PC-3 (cell line): ENCODE measurements at regions of chr3 and their contacts with region 1.

Region 1: GRCh38 chr3:4290272-4290893 is 12.8 kb upstream of the SETMAR start:
- DNase-seq: peak; percentile 74
- ATAC-seq: peak; percentile 72
- H3K4me3 ChIP-seq: no peak overlapping the region
- H3K27ac ChIP-seq: no peak overlapping the region
- H3K4me1 ChIP-seq: no peaks in the 10 kb centered on the region
- H3K27me3 ChIP-seq: peaks cover 18% of the 10 kb centered on the region; the same call in 1 of the 2 replicates
- CTCF ChIP-seq: peak; percentile 93

Region 2: DNA sequence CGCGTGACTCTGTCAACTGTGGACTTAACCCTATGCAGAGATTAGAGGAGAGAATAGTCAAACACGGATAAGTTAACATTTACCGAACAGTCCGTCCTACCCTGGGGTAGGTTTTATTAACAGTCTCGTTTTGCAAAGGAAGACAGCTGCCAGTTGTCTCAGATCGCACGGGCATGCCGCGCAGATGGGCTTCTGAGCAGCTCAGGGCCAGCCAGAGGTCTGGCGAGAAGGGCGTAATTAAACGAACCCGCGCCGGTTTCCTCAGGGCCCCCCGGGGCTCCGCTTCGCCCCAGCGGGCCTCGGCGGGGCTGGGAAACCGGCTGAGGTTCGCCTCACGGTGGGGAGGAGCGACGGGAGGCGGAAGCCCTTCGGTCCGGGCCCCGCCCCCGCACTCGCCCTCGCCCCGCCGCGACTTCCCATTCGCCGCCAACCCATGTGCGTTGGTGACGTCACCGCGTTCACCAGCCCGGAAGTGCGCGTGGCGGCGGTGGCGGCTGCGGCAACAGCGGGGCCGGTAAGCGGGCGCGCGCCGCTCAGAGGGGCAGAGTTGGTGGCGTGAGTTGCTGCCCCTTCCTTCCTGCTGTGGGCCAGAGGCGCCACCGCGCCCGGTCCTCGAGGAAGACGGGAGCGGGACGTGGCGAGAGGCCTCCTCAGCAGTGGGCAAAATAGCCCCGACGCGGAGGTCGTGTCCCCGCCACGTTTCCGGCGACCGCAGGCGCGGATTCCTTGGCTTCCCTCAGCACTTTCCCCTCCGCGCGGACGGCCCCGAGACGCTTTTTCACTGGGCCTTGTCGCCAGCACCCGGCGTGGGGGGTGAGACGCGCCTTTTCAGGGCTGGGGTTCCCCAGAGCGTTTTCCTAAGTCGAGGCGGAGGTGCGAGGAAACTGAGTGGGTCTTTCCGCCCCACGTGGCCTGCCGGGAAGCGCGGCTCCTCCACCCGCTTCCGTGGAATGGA is 1163.6 kb before region 1 on chr3 and contains the start of gene TRNT1:
- CTCF ChIA-PET with region 1: no interaction called
- POLR2A ChIA-PET with region 1: no interaction called
- intact Hi-C with region 1: loop called (anchors 10 kb)
- DNase-seq: peak; percentile 92
- ATAC-seq: peak; percentile 95
- H3K4me3 ChIP-seq: peak within 1 kb of the TSS; percentile 86
- H3K27ac ChIP-seq: peak within 1 kb of the TSS; percentile 66
- H3K4me1 ChIP-seq: peaks cover 19% of the 10 kb centered on the region
- H3K27me3 ChIP-seq: no peaks in the 10 kb centered on the region
- CTCF ChIP-seq: no peak
- total RNA-seq, gene TRNT1: 26.2 and 33.2 TPM in 2 replicates

Region 3: GRCh38 chr3:4712143-4712542 is 421.8 kb after region 1 on chr3:
- CTCF ChIA-PET with region 1: no interaction called
- POLR2A ChIA-PET with region 1: no interaction called
- intact Hi-C with region 1: no loop called
- DNase-seq: peak; percentile 55
- ATAC-seq: no peak
- H3K4me3 ChIP-seq: no peak overlapping the region
- H3K27ac ChIP-seq: peak overlapping the region; percentile 18; the same call in 1 of the 2 replicates
- H3K4me1 ChIP-seq: peaks cover 28% of the 10 kb centered on the region
- H3K27me3 ChIP-seq: no peaks in the 10 kb centered on the region
- CTCF ChIP-seq: no peak